ENCODE measurements at regions of chr10 and their contacts with region 1.

Region 1: DNA sequence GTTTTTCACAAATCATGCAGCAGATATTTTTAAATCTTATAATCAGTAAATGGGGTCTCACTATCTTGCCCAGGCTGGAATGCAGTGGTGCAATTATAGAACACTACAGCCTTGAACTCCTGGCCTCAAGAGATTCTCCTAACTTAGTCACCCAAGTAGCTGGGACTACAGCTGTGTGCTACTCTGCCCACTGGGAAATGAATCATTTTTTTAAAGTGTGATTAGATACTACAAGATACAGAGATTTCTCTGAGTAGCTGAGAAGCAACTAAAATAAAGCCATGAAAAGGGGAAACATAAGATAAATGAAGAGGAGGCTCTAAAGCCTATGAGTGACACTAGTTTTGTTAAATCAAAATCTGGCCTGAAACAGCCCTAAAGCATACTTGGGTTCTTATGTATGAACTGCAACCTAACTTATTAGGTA is 119.7 kb downstream of the JMJD1C start:
- DNase-seq: no peak
- H3K4me3 ChIP-seq: no peak overlapping the region
- H3K27ac ChIP-seq: no peak overlapping the region
- H3K4me1 ChIP-seq: no peaks in the 10 kb centered on the region
- H3K27me3 ChIP-seq: no peaks in the 10 kb centered on the region
- CTCF ChIP-seq: no peak
- POLR2A ChIP-seq: no peak

Region 2: DNA sequence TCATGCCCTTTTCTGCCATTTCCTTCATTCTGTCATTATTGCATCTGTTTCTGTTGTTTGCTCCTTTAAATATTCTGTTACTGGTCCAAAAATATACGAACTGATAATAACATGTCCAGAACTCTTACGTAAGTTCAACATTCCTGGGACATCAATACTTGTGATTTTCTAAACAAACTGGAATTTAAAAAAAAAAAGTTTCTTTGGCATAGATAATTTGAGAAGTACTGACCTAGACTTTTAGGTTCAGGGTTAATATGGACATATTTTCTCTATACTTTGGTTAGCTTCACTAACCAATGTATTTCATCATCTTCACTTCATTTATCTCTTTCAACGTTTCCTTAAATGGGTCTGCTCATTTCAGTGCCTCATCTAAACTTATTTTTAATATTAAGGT is 27.5 kb before region 1 on chr10:
- intact Hi-C with region 1: loop called (anchors 1 kb)
- DNase-seq: no peak
- H3K4me3 ChIP-seq: no peak overlapping the region
- H3K27ac ChIP-seq: no peak overlapping the region
- H3K4me1 ChIP-seq: no peaks in the 10 kb centered on the region
- H3K27me3 ChIP-seq: no peaks in the 10 kb centered on the region
- CTCF ChIP-seq: no peak
- POLR2A ChIP-seq: no peak